Spleen (tissue), 13 donors: ENCODE measurements at regions of chr6 and their contacts with region 1.

Region 1: GRCh38 chr6:158972241-158973233 is 27.5 kb downstream of the RSPH3 start:
- DNase-seq: no peak
- H3K4me3 ChIP-seq: no peak overlapping the region
- H3K27ac ChIP-seq: no peak overlapping the region
- H3K4me1 ChIP-seq: peaks cover 0 to 9% (median 6%) of the 10 kb centered on the region in 6 donors
- H3K27me3 ChIP-seq: no peaks in the 10 kb centered on the region
- CTCF ChIP-seq: peak in 9 of 11 experiments; percentile 37 to 67 (median 60)
- POLR2A ChIP-seq: no peak

Region 2: DNA sequence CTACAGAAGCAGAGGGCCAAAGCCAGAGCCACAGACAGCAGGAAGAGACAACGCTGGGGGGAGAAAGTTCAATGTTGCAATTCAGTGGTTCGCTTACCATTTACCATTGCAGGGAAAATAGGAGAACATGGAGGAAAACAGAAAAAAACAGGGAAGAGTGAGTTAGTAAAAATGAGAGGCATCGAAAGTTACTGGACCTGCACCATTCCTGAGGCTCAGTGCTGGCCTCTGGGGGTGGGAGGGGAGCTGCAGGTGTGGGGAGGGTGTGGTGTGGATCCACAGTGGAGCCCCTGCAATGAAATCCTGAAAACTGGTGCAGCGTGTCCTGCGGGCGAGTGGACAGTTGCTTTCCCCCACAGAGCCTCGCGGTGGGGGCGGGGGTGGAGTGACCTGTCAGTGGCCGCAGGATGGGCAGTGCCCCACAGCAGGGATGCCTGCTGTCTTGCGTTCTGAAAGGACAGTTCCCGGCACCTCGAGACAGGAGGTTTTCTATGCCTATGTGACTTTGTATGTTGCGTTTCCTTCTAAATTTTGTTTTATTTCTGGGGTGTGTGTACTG is 407.0 kb before region 1 on chr6:
- intact Hi-C with region 1: no loop called
- DNase-seq: no peak
- H3K4me3 ChIP-seq: peak overlapping the region in 1 of 8 donors; percentile 42
- H3K27ac ChIP-seq: peak overlapping the region in 5 of 8 donors; percentile 22 to 79 (median 55)
- H3K4me1 ChIP-seq: peaks cover 10 to 94% (median 85%) of the 10 kb centered on the region in 6 donors
- H3K27me3 ChIP-seq: no peaks in the 10 kb centered on the region
- CTCF ChIP-seq: no peak
- POLR2A ChIP-seq: no peak

Region 3: DNA sequence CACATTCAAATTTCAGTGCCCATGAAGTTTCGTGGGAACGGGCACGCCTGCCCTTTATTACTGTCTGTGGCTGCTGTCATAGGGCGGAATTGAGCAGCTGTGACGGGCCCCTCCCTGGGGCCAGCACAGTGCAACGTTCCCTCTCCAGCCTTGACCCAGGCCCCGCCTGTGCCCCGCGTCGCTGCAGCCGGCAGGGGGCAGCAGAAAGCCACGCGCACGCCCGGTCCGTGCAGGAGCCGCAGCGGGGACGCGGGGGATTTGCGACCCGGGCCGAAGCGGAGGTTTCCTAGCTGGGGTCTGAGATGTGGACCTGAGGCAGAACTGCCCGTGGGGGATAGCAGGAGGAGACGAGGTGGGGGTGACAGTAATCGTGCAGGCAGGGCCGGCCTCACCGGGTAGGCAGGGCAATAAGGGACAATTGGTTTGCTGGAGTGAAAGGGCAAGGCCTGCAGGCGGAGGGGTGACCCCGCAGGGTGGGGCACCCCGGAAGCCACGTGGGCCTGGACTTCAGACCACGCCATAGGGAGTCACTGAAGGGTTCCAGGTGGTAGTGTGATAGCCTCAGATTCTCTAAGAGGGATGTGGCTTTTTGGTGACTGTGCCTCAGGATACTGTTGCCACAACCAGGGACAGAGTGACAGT is 268.2 kb before region 1 on chr6:
- intact Hi-C with region 1: loop called (anchors 2 kb)
- DNase-seq: peak; percentile 96
- H3K4me3 ChIP-seq: peak overlapping the region in 7 of 8 donors; percentile 13 to 66 (median 29)
- H3K27ac ChIP-seq: peak overlapping the region in 4 of 8 donors; percentile 24 to 68 (median 43)
- H3K4me1 ChIP-seq: peaks cover 0 to 50% (median 25%) of the 10 kb centered on the region in 6 donors
- H3K27me3 ChIP-seq: no peaks in the 10 kb centered on the region
- CTCF ChIP-seq: peak; percentile 96 to 100 (median 99)
- POLR2A ChIP-seq: no peak

Region 4: GRCh38 chr6:159084493-159085091 is 112.1 kb after region 1 on chr6:
- intact Hi-C with region 1: no loop called
- DNase-seq: no peak
- H3K4me3 ChIP-seq: no peak overlapping the region
- H3K27ac ChIP-seq: no peak overlapping the region
- H3K4me1 ChIP-seq: peaks cover 0 to 32% (median 14%) of the 10 kb centered on the region in 6 donors
- H3K27me3 ChIP-seq: no peaks in the 10 kb centered on the region
- CTCF ChIP-seq: no peak
- POLR2A ChIP-seq: no peak